ENCODE measurements at regions of chr3 and their contacts with region 1.

Region 1: GRCh38 chr3:96101015-96101667 is 713.3 kb upstream of the EPHA6 start:
- DNase-seq: no peak
- H3K4me3 ChIP-seq: no peak overlapping the region
- H3K27ac ChIP-seq: no peak overlapping the region
- H3K4me1 ChIP-seq: no peaks in the 10 kb centered on the region
- H3K27me3 ChIP-seq: no peaks in the 10 kb centered on the region
- CTCF ChIP-seq: no peak
- POLR2A ChIP-seq: no peak

Region 2: GRCh38 chr3:95609411-95609810 is 491.7 kb before region 1 on chr3:
- CTCF ChIA-PET with region 1: no interaction called
- POLR2A ChIA-PET with region 1: no interaction called
- dilution Hi-C with region 1: no loop called
- intact Hi-C with region 1: no loop called
- DNase-seq: no peak
- H3K4me3 ChIP-seq: no peak overlapping the region
- H3K27ac ChIP-seq: no peak overlapping the region
- H3K4me1 ChIP-seq: no peaks in the 10 kb centered on the region
- H3K27me3 ChIP-seq: no peaks in the 10 kb centered on the region
- CTCF ChIP-seq: no peak
- POLR2A ChIP-seq: no peak

Region 3: DNA sequence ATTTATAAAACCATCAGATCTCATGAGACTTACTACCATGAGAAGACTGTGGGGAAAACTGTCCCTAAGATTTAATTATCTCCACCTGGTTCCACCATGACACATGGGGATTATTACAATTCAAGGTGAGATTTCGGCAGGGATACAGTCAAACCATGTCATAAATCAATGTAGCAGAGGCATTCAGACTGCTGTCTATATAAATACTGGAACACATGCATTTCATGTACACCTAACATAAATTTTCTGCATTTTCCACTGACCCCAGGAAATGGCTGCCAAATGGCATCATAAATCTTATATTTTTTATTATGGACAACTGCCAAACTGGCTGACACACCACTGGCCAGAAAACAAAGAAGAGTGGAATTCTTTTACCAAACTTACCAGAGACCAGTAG is 41.8 kb before region 1 on chr3:
- CTCF ChIA-PET with region 1: no interaction called
- POLR2A ChIA-PET with region 1: interaction called, 15 read pairs
- dilution Hi-C with region 1: no loop called
- intact Hi-C with region 1: no loop called
- DNase-seq: no peak
- H3K4me3 ChIP-seq: no peak overlapping the region
- H3K27ac ChIP-seq: no peak overlapping the region
- H3K4me1 ChIP-seq: no peaks in the 10 kb centered on the region
- H3K27me3 ChIP-seq: no peaks in the 10 kb centered on the region
- CTCF ChIP-seq: no peak
- POLR2A ChIP-seq: no peak